ENCODE measurements at regions of chr1 and their contacts with region 1.

Region 1: DNA sequence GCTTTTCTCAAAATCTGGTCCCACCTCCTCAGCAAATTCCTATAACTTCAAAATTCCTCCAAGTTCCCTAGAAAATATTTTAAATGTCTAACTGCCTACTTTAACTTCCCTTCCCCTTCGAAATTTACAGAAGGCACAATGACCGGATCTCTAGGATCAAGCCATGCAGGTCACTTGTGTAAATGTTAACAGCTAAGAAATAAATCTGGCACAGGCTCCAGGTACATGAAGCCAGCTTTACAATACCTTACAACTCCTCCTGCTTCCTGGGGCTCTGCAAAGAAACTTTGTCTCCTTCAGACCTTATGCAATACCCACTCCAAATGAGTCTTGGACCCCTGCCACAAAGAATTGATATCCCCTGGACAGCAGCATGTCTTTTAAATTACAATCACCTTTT is 1164.2 kb downstream of the BRINP3 start:
- DNase-seq: no peak
- ATAC-seq: no peak
- H3K4me3 ChIP-seq: no peak overlapping the region
- H3K4me3 Mint-ChIP-seq: no peak overlapping the region
- H3K27ac ChIP-seq: no peak overlapping the region
- H3K27ac Mint-ChIP-seq: no peak overlapping the region
- H3K4me1 ChIP-seq: no peaks in the 10 kb centered on the region
- H3K4me1 Mint-ChIP-seq: no peaks in the 10 kb centered on the region
- H3K27me3 ChIP-seq: no peaks in the 10 kb centered on the region
- H3K27me3 Mint-ChIP-seq: no peaks in the 10 kb centered on the region

Region 2: GRCh38 chr1:189374816-189375215 is 61.3 kb after region 1 on chr1:
- CTCF ChIA-PET with region 1: no interaction called
- POLR2A ChIA-PET with region 1: no interaction called
- intact Hi-C with region 1: loop called in 1 of 2 experiments (anchors 10 kb)
- DNase-seq: no peak
- ATAC-seq: no peak
- H3K4me3 ChIP-seq: no peak overlapping the region
- H3K4me3 Mint-ChIP-seq: no peak overlapping the region
- H3K27ac ChIP-seq: no peak overlapping the region
- H3K27ac Mint-ChIP-seq: no peak overlapping the region
- H3K4me1 ChIP-seq: no peaks in the 10 kb centered on the region
- H3K4me1 Mint-ChIP-seq: no peaks in the 10 kb centered on the region
- H3K27me3 ChIP-seq: no peaks in the 10 kb centered on the region
- H3K27me3 Mint-ChIP-seq: no peaks in the 10 kb centered on the region